ENCODE measurements at regions of chr10 and their contacts with region 1.

Region 1: GRCh38 chr10:97210543-97210961 is 24.8 kb upstream of the SLIT1 start:
- DNase-seq: peak; percentile 67 to 97
- H3K4me3 ChIP-seq: no peak overlapping the region
- H3K27ac ChIP-seq: no peak overlapping the region
- H3K4me1 ChIP-seq: no peaks in the 10 kb centered on the region
- H3K27me3 ChIP-seq: no peaks in the 10 kb centered on the region
- CTCF ChIP-seq: peak; percentile 90 to 95 (median 94)
- EP300 ChIP-seq: no peak
- POLR2A ChIP-seq: no peak
- RAD21 ChIP-seq: peak; percentile 91 to 95

Region 2: DNA sequence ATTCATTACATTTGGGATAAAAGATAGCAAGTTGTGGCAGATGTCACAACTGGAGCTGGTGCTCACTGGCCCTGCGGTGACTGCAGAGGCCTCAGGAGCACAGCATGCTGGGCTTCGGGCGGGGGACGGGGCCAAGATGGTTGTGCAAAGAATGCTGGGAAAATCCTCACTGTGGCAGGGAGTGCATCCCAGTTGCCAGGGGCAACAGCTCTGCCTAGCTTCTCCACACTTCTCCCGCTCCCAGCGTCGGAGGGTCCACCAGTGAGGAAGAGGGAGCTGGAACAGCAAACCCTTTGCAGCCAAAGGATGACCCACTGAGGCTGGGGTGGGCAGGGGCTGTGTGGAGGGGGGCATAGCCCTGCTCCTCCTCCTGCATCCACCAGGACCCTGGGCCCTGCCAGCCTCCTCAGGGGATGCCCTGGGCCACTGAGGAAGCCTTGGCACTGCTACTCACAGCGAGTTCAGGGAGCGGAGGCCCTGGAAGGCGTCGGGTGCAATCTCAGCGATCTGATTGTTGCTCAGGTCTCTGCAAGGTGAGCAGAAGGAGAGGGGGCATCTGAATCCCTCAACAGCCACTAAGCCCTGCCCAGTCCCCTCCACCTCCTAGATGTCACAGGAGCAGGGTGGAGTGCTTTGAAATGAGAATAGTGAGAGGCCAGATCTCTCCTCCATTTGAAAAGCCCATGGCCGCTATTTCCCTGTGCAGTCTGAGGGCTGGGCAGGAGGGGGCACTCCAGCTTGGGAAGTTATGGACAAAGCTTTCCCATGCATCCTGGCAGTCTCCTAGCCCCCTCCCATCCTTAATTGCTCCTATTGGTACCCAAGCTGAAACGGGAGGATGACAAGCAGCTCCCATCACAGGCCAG is 151.3 kb before region 1 on chr10:
- CTCF ChIA-PET with region 1: interaction called, 1,348 read pairs
- POLR2A ChIA-PET with region 1: no interaction called
- DNase-seq: peak in 1 of 2 experiments; percentile 77
- H3K4me3 ChIP-seq: no peak overlapping the region
- H3K27ac ChIP-seq: no peak overlapping the region
- H3K4me1 ChIP-seq: peaks cover 0 to 11% (median 2%) of the 10 kb centered on the region in 4 experiments; a peak in 3 of 7 replicates
- H3K27me3 ChIP-seq: no peaks in the 10 kb centered on the region
- CTCF ChIP-seq: peak; percentile 68 to 71 (median 69)
- EP300 ChIP-seq: no peak
- POLR2A ChIP-seq: no peak
- RAD21 ChIP-seq: peak; percentile 66 to 75

Region 3: DNA sequence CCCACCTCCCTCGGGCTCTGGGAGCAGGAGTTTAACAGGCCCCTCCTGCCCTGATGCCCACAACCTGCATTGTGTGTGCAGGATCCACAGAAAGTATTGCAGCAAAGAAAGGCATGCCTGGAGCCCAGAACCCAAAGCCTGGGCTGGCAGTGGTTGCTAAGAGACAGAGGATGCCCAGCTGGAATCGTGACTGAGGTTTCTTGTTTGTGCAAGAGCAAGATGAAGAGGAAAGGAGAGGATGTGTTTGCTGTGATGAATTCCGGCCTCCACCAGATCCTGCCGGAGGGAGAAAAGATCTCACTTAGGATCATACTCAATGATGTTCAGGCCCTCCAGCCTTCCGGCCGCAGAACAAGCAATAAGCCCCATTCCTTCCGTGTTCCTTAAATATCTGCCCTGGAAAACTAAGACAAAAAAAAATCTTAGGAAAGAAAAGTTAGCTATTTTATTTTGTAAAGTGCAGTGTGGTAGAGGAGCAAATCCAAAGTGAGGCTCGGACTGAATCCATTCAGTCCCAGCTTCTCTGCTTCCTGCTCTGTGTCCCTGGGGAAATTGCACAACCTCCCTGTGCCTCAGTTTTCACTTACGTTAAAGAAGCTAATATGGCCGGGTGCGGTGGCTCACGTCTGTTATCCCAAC is 81.9 kb before region 1 on chr10:
- CTCF ChIA-PET with region 1: interaction called, 20 read pairs
- POLR2A ChIA-PET with region 1: no interaction called
- DNase-seq: no peak
- H3K4me3 ChIP-seq: no peak overlapping the region
- H3K27ac ChIP-seq: no peak overlapping the region
- H3K4me1 ChIP-seq: 0 out of 7 replicates have a peak, but pooled peaks cover 0 to 2% (median 0%) of the 10 kb centered on the region in 4 experiments
- H3K27me3 ChIP-seq: no peaks in the 10 kb centered on the region
- CTCF ChIP-seq: no peak
- EP300 ChIP-seq: no peak
- POLR2A ChIP-seq: no peak
- RAD21 ChIP-seq: no peak

Region 4: GRCh38 chr10:97149079-97149531 is 61.4 kb before region 1 on chr10:
- CTCF ChIA-PET with region 1: interaction called, 12 read pairs
- POLR2A ChIA-PET with region 1: no interaction called
- DNase-seq: no peak
- H3K4me3 ChIP-seq: no peak overlapping the region
- H3K27ac ChIP-seq: no peak overlapping the region
- H3K4me1 ChIP-seq: peaks cover 0 to 3% (median 0%) of the 10 kb centered on the region in 4 experiments; a peak in 1 of 7 replicates
- H3K27me3 ChIP-seq: no peaks in the 10 kb centered on the region
- CTCF ChIP-seq: no peak
- EP300 ChIP-seq: no peak
- POLR2A ChIP-seq: no peak
- RAD21 ChIP-seq: no peak

Region 5: GRCh38 chr10:97196223-97197029 is 14.1 kb before region 1 on chr10:
- CTCF ChIA-PET with region 1: interaction called, 212 read pairs
- POLR2A ChIA-PET with region 1: no interaction called
- DNase-seq: peak; percentile 56 to 85
- H3K4me3 ChIP-seq: peak overlapping the region; percentile 49 to 76 (median 64)
- H3K27ac ChIP-seq: no peak overlapping the region
- H3K4me1 ChIP-seq: peaks cover 2 to 9% (median 5%) of the 10 kb centered on the region in 4 experiments; a peak in 5 of 7 replicates
- H3K27me3 ChIP-seq: peaks cover 0 to 12% (median 7%) of the 10 kb centered on the region in 4 experiments; a peak in 5 of 7 replicates
- CTCF ChIP-seq: peak; percentile 73 to 89 (median 83)
- EP300 ChIP-seq: no peak
- POLR2A ChIP-seq: no peak
- RAD21 ChIP-seq: peak; percentile 55 to 73

Region 6: DNA sequence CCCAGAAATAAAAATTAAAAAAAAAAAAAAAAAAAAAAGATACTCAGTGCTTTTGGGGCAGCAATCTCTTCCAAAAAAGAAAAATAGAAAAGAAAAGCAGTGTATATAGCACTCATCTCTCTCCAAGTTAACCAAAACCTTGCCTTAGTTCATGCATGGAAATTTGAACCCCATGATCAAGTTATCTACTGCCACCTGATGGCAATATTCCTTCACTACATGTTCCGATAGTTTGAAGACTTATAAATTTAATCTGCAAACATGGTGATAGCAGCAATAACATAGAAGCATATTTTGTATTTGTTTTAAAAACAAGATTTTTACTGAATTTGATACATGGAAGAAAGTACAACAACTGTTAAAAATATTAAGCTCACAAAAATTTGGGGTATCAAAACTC is 23.8 kb after region 1 on chr10:
- CTCF ChIA-PET with region 1: interaction called, 36 read pairs
- POLR2A ChIA-PET with region 1: no interaction called
- DNase-seq: no peak
- H3K4me3 ChIP-seq: no peak overlapping the region
- H3K27ac ChIP-seq: no peak overlapping the region
- H3K4me1 ChIP-seq: no peaks in the 10 kb centered on the region
- H3K27me3 ChIP-seq: no peaks in the 10 kb centered on the region
- CTCF ChIP-seq: peak in 2 of 3 experiments; percentile 31 to 57; a peak in 2 of 4 replicates
- EP300 ChIP-seq: no peak
- POLR2A ChIP-seq: no peak
- RAD21 ChIP-seq: peak; percentile 70 to 75

Region 7: DNA sequence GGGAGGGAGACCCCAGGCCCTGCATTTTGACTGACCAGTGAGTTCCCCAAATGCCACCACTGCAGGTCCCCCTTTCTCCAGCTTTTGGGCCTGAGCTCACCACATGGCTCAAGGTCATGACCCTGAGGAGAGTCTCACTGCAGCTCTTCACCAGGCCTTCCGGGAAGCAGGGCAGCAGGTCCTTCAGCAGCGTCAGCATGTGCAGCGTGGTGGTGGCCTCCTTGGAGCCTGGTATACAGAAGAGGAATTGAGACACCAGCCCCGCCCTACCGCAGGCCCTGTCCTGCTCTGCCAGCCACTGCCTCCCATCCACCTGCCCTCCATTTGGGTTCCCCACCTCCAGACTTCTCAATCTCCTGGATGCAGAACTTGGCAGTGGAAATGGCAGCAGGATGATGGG is 177.6 kb after region 1 on chr10:
- CTCF ChIA-PET with region 1: no interaction called
- POLR2A ChIA-PET with region 1: no interaction called
- DNase-seq: no peak
- H3K4me3 ChIP-seq: no peak overlapping the region
- H3K27ac ChIP-seq: no peak overlapping the region
- H3K4me1 ChIP-seq: no peaks in the 10 kb centered on the region
- H3K27me3 ChIP-seq: no peaks in the 10 kb centered on the region
- CTCF ChIP-seq: no peak
- EP300 ChIP-seq: no peak
- POLR2A ChIP-seq: no peak
- RAD21 ChIP-seq: no peak

Measured in H1 (cell line).